Esophagus squamous epithelium (tissue), 5 donors: ENCODE measurements at regions of chr10 and their contacts with region 1.

Region 1: GRCh38 chr10:28991326-28992270 is 297.3 kb upstream of the LYZL1 start:
- DNase-seq: no peak
- H3K4me3 ChIP-seq: no peak overlapping the region
- H3K27ac ChIP-seq: peak overlapping the region in 3 of 4 donors; percentile 23 to 45 (median 24)
- H3K4me1 ChIP-seq: peaks cover 0 to 18% (median 6%) of the 10 kb centered on the region in 3 donors
- H3K27me3 ChIP-seq: peaks cover 0 to 11% (median 0%) of the 10 kb centered on the region in 4 donors
- CTCF ChIP-seq: peak in 5 of 6 experiments; percentile 64 to 89 (median 79)
- POLR2A ChIP-seq: no peak

Region 2: DNA sequence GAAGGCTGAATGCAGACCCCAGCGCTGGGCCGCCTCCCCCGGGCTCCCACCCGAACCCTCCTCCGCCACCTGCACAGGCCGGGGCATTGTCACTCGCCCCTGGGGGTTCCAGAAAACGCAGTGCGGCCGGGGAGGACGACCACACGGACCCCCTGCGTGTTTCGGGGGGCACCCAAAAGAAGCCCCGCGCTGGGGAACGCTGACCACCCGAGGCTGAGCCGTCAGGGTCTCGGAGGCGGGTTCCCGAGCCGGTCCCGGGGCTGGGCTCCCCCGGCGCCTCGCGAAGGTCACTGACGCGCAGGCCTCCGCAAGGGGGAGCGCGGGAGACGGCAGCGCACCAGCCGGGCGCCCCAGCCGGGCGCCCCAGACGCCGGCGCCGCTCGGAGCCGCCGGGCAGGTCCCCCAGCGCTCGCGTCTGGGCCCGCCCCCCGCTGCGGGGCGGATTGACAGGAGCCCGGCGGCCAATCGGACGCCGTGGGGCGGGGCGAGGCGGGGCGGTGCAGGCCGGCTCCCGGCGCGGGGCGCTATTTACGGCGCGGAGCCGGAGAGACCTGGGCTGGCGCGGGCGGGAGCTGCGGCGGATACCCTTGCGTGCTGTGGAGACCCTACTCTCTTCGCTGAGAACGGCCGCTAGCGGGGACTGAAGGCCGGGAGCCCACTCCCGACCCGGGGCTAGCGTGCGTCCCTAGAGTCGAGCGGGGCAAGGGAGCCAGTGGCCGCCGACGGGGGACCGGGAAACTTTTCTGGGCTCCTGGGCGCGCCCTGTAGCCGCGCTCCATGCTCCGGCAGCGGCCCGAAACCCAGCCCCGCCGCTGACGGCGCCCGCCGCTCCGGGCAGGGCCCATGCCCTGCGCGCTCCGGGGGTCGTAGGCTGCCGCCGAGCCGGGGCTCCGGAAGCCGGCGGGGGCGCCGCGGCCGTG is 314.4 kb before region 1 on chr10 and contains the start of gene BAMBI:
- intact Hi-C with region 1: loop called (anchors 5 kb)
- DNase-seq: peak; percentile 42
- H3K4me3 ChIP-seq: peak within 1 kb of the TSS; percentile 44 to 79 (median 68)
- H3K27ac ChIP-seq: peak within 1 kb of the TSS; percentile 32 to 64 (median 48)
- H3K4me1 ChIP-seq: peaks cover 6 to 37% (median 9%) of the 10 kb centered on the region in 3 donors
- H3K27me3 ChIP-seq: peaks cover 0 to 93% (median 2%) of the 10 kb centered on the region in 4 donors
- CTCF ChIP-seq: peak; percentile 47 to 88 (median 84)
- POLR2A ChIP-seq: peak in 3 of 4 donors; percentile 63 to 86 (median 80)
- total RNA-seq, gene BAMBI: 2.5 to 6.8 (median 4.4) TPM

Region 3: DNA sequence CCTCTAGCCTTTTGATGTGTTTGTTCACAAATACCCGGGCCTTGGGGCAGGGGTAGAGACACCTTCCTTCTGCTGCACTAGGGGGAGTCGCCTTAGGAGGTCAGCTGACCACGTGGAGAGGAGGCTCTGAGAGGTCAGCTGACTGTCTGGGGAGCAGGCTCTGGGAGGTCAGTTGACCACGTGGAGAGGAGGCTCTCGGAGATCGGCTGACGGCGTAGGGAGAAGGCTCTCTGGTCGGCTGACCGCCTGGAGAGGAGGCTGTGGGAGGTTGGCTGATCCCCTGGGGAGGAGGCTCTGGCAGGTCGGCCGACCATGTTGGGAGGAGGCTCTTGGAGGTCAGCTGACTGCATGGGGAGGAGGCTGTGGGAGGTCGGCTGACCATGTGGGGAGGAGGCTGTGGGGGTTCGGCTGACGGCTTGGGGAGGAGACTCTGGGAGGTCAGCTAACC is 237.7 kb after region 1 on chr10:
- intact Hi-C with region 1: no loop called
- DNase-seq: no peak
- H3K4me3 ChIP-seq: no peak overlapping the region
- H3K27ac ChIP-seq: no peak overlapping the region
- H3K4me1 ChIP-seq: no peaks in the 10 kb centered on the region
- H3K27me3 ChIP-seq: peaks cover 0 to 30% (median 0%) of the 10 kb centered on the region in 4 donors
- CTCF ChIP-seq: no peak
- POLR2A ChIP-seq: no peak